ENCODE measurements at regions of chr1 and their contacts with region 1.

Region 1: GRCh38 chr1:178808529-178808928 is 62.3 kb downstream of the ANGPTL1 start:
- DNase-seq: no peak
- ATAC-seq: no peak
- H3K4me3 ChIP-seq: no peak overlapping the region
- H3K27ac ChIP-seq: no peak overlapping the region
- H3K4me1 ChIP-seq: no peaks in the 10 kb centered on the region
- H3K27me3 ChIP-seq: no peaks in the 10 kb centered on the region
- CTCF ChIP-seq: no peak

Region 2: GRCh38 chr1:178877896-178878295 is 69.4 kb after region 1 on chr1:
- CTCF ChIA-PET with region 1: interaction called, 10 read pairs
- POLR2A ChIA-PET with region 1: no interaction called
- intact Hi-C with region 1: no loop called
- DNase-seq: no peak
- ATAC-seq: no peak
- H3K4me3 ChIP-seq: no peak overlapping the region
- H3K27ac ChIP-seq: no peak overlapping the region
- H3K4me1 ChIP-seq: no peaks in the 10 kb centered on the region
- H3K27me3 ChIP-seq: no peaks in the 10 kb centered on the region
- CTCF ChIP-seq: no peak

Region 3: DNA sequence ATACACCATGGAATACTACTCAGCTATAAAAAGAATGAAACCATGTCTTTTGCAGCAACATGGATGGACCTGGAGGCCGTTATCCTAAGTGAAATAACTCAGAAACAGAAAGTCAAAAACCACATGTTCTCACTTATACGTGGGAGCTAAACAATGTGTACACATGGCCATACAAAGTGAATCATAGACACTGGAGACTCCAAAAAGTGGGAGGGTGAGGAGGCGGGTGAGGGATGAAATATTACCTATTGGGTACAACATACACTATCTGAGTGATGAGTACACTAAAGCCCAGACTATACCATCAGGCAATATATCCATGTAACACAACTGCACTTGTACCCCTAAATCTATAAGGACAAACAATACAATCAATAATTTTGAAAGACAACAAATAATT is 177.7 kb after region 1 on chr1:
- CTCF ChIA-PET with region 1: no interaction called
- POLR2A ChIA-PET with region 1: no interaction called
- intact Hi-C with region 1: no loop called
- DNase-seq: no peak
- ATAC-seq: no peak
- H3K4me3 ChIP-seq: no peak overlapping the region
- H3K27ac ChIP-seq: no peak overlapping the region
- H3K4me1 ChIP-seq: no peaks in the 10 kb centered on the region
- H3K27me3 ChIP-seq: no peaks in the 10 kb centered on the region
- CTCF ChIP-seq: no peak